PC-9 (cell line): ENCODE measurements at regions of chr5 and their contacts with region 1.

Region 1: GRCh38 chr5:61268871-61269270 is 63.2 kb upstream of the ZSWIM6 start:
- DNase-seq: no peak
- H3K4me3 ChIP-seq: no peak overlapping the region
- H3K27ac ChIP-seq: no peak overlapping the region
- H3K4me1 ChIP-seq: no peaks in the 10 kb centered on the region
- H3K27me3 ChIP-seq: no peaks in the 10 kb centered on the region
- CTCF ChIP-seq: no peak

Region 2: DNA sequence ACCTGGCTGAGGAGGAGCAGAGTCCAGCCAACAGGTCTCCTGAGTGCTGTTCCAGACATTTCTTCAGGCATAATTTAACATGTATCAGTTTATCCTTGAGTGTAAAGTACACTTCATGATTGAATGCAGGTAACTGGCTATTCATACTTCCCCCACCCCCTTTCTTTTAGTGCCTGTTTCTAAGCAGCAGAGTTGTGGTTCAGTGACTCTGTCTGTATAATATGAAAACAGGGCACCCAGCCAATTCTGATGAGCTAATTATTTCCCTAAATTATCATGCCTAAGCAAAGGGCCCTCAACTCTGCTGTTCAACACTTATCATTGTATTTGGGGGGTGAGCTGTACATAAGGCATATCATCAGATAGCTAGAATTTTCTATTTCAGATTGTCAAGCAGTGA is 11.3 kb after region 1 on chr5:
- CTCF ChIA-PET with region 1: interaction called, 14 read pairs
- POLR2A ChIA-PET with region 1: no interaction called
- intact Hi-C with region 1: no loop called
- DNase-seq: peak in 1 of 2 experiments; percentile 49
- H3K4me3 ChIP-seq: no peak overlapping the region
- H3K27ac ChIP-seq: no peak overlapping the region
- H3K4me1 ChIP-seq: peaks cover 28% of the 10 kb centered on the region
- H3K27me3 ChIP-seq: no peaks in the 10 kb centered on the region
- CTCF ChIP-seq: no peak